Natural killer cell (primary cell): ENCODE measurements at regions of chr5 and their contacts with region 1.

Region 1: DNA sequence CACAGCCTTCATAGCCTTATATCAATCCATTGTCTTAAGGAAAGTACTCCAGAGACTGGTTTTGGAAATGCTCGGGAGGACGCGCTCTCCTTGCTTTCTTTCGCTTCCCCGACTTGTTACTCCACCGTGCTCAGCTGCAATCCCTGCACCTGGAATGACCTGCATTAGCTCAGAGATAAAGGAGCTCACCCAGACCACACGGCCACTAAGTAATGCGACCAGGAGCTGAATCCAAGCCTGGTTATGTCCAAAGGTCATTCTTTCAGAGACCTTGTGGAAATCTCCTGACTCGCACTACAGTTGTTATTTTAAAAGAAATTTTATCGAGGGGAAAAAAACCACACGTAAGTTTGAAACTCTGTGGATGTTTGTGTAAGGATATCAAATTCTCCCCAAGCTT is 135.3 kb upstream of the DPYSL3 start:
- DNase-seq: no peak
- ATAC-seq: no peak
- H3K4me3 ChIP-seq: no peak overlapping the region
- H3K4me3 Mint-ChIP-seq: no peak overlapping the region
- H3K27ac ChIP-seq: no peak overlapping the region
- H3K27ac Mint-ChIP-seq: no peak overlapping the region
- H3K4me1 ChIP-seq: no peaks in the 10 kb centered on the region
- H3K4me1 Mint-ChIP-seq: peaks cover 14 to 16% of the 10 kb centered on the region in 2 donors
- H3K27me3 ChIP-seq: no peaks in the 10 kb centered on the region
- H3K27me3 Mint-ChIP-seq: no peaks in the 10 kb centered on the region
- CTCF ChIP-seq: no peak

Region 2: DNA sequence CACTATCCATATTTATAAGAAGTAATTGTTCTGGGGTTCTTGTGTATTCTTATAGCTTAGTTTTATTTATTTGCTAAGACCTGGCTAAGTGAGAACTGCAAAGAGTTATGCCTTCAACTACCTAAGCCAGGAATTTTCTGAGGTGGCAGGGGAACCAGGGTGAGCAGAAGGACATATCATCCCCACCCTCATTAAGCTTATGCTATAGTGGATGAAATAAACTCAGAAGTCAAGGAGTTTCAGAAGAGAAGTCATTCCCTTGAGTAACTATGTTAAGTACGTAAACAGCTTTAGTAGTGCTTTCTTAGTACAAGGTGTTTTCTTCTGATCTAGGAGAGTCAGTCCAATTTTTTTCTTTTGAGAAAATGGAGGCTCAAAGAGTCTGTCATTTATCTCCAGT is 368.7 kb before region 1 on chr5:
- intact Hi-C with region 1: no loop called
- DNase-seq: no peak
- ATAC-seq: no peak
- H3K4me3 ChIP-seq: no peak overlapping the region
- H3K4me3 Mint-ChIP-seq: no peak overlapping the region
- H3K27ac ChIP-seq: no peak overlapping the region
- H3K27ac Mint-ChIP-seq: no peak overlapping the region
- H3K4me1 ChIP-seq: no peaks in the 10 kb centered on the region
- H3K4me1 Mint-ChIP-seq: no peaks in the 10 kb centered on the region
- H3K27me3 ChIP-seq: no peaks in the 10 kb centered on the region
- H3K27me3 Mint-ChIP-seq: peaks cover 0 to 3% of the 10 kb centered on the region in 2 donors
- CTCF ChIP-seq: no peak

Region 3: GRCh38 chr5:147437161-147437596 is 208.0 kb before region 1 on chr5:
- intact Hi-C with region 1: no loop called
- DNase-seq: no peak
- ATAC-seq: no peak
- H3K4me3 ChIP-seq: no peak overlapping the region
- H3K4me3 Mint-ChIP-seq: no peak overlapping the region
- H3K27ac ChIP-seq: no peak overlapping the region
- H3K27ac Mint-ChIP-seq: no peak overlapping the region
- H3K4me1 ChIP-seq: no peaks in the 10 kb centered on the region
- H3K4me1 Mint-ChIP-seq: no peaks in the 10 kb centered on the region
- H3K27me3 ChIP-seq: no peaks in the 10 kb centered on the region
- H3K27me3 Mint-ChIP-seq: peaks cover 19 to 28% of the 10 kb centered on the region in 2 donors
- CTCF ChIP-seq: no peak

Region 4: DNA sequence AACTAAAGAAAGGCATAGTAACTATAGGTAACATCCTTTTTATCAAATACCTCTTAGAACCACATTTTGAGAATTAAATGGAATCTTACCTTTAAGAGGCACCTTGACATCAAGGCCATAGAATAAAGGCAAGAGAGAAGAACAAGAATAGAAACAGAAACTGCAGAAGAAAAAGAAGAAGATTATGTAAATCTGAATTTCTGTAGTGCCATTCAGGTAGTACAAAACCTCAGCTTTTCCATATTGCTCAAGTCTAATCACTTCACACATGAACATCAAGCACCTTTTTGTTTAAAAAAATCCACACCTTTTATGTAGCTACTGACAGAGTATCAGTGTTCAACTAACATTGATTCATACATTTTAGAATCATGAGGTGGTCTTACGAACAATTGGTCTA is 43.5 kb before region 1 on chr5:
- intact Hi-C with region 1: no loop called
- DNase-seq: no peak
- ATAC-seq: no peak
- H3K4me3 ChIP-seq: no peak overlapping the region
- H3K4me3 Mint-ChIP-seq: no peak overlapping the region
- H3K27ac ChIP-seq: no peak overlapping the region
- H3K27ac Mint-ChIP-seq: peak overlapping the region in 1 of 2 donors; percentile 19
- H3K4me1 ChIP-seq: no peaks in the 10 kb centered on the region
- H3K4me1 Mint-ChIP-seq: peaks cover 0 to 4% of the 10 kb centered on the region in 2 donors
- H3K27me3 ChIP-seq: no peaks in the 10 kb centered on the region
- H3K27me3 Mint-ChIP-seq: no peaks in the 10 kb centered on the region
- CTCF ChIP-seq: no peak

Region 5: DNA sequence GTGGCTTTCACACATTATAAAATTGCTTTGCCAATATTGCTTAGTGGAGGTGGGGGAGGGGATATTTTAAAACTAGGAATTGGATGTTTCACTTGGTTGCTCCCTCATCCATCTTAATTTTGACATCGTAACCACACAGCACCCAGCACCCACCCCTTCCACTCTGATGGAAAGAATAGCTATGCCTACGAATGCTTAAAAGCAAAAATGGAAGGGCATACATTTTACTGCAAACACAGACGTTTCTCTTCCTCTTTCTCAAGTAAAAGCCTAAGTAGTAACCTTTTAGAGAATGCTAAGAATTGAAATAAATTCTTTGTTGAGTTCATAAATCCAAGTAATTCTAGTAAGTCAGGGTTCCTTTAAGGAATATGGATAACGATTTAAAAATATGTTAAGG is 67.4 kb after region 1 on chr5:
- intact Hi-C with region 1: no loop called
- DNase-seq: no peak
- ATAC-seq: peak in 2 of 3 donors; percentile 37 to 65
- H3K4me3 ChIP-seq: peak overlapping the region; percentile 0
- H3K4me3 Mint-ChIP-seq: peak overlapping the region; percentile 93
- H3K27ac ChIP-seq: peak overlapping the region; percentile 5
- H3K27ac Mint-ChIP-seq: peak overlapping the region; percentile 76 to 86
- H3K4me1 ChIP-seq: peaks cover 4% of the 10 kb centered on the region
- H3K4me1 Mint-ChIP-seq: peaks cover 36 to 38% of the 10 kb centered on the region in 2 donors
- H3K27me3 ChIP-seq: no peaks in the 10 kb centered on the region
- H3K27me3 Mint-ChIP-seq: no peaks in the 10 kb centered on the region
- CTCF ChIP-seq: no peak

Region 6: DNA sequence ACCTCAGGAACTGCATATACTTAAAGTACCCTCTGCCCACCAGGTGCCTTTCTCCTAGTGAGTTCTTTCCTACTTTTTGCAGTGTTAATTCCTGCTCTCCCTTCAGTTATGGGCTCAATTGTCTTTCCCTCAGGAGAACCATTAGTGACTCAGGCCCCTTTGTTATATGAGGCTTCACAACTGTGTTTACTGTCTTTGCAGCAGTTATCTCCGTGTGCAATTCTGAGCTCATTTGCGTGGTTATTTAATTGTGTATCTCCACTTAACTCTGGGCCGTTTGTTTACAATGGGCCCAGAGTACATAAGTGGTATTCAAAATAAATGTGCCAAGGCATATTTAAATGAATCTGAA is 748.2 kb after region 1 on chr5:
- intact Hi-C with region 1: loop called (anchors 5 kb)
- DNase-seq: no peak
- ATAC-seq: no peak
- H3K4me3 ChIP-seq: no peak overlapping the region
- H3K4me3 Mint-ChIP-seq: no peak overlapping the region
- H3K27ac ChIP-seq: no peak overlapping the region
- H3K27ac Mint-ChIP-seq: peak overlapping the region in 1 of 2 donors; percentile 60
- H3K4me1 ChIP-seq: no peaks in the 10 kb centered on the region
- H3K4me1 Mint-ChIP-seq: peaks cover 42 to 54% of the 10 kb centered on the region in 2 donors
- H3K27me3 ChIP-seq: no peaks in the 10 kb centered on the region
- H3K27me3 Mint-ChIP-seq: no peaks in the 10 kb centered on the region
- CTCF ChIP-seq: no peak